PC-3 (cell line): ENCODE measurements at regions of chr7 and their contacts with region 1.

Region 1: GRCh38 chr7:24979863-24980533 is at the start of gene OSBPL3:
- DNase-seq: peak; percentile 96
- ATAC-seq: peak; percentile 66
- H3K4me3 ChIP-seq: peak within 1 kb of the TSS; percentile 72
- H3K27ac ChIP-seq: peak within 1 kb of the TSS; percentile 62
- H3K4me1 ChIP-seq: peaks cover 18% of the 10 kb centered on the region
- H3K27me3 ChIP-seq: no peaks in the 10 kb centered on the region
- CTCF ChIP-seq: no peak
- total RNA-seq, gene OSBPL3: 10.5 and 11.6 TPM in 2 replicates

Region 2: DNA sequence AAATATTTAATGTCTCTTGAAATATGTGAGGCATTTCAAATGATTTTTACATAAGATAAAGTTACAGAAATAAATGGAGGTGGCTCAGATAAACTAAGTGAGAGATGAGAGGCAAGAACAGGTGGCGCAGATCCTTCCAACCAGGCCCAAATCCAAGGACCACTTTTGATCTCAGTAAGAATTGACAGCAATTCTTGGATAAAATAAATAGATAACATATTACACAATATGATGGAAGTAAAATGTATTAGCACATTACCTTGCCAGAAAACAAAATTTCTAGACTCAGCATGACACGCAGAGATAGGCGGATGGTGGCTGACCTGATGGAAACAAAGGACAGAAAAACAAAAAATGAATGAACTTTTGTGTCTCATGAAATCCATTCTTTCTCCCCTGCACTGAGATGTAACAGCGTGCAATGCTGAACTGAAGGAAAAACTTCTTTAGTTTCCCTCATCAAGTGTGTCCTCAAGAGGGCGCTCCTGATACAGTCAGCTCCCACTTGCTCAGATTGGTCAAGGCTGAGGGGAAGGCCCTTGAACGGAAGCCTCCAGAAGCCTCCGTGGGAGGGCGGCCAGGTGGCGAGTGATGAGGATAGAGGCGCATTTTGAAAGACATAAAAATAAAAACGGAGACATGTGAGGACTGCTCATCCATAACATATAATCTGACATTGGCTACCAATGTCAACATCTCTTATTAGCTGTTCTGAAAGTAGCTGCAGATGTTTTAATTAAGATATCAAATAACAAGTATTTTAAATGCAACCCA is 159.9 kb before region 1 on chr7:
- CTCF ChIA-PET with region 1: interaction called, 8 read pairs
- POLR2A ChIA-PET with region 1: interaction called, 8 read pairs
- intact Hi-C with region 1: loop called (anchors 1 kb)
- DNase-seq: peak; percentile 89
- ATAC-seq: peak; percentile 57
- H3K4me3 ChIP-seq: peak overlapping the region; percentile 46
- H3K27ac ChIP-seq: peak overlapping the region; percentile 97
- H3K4me1 ChIP-seq: peaks cover 39% of the 10 kb centered on the region
- H3K27me3 ChIP-seq: no peaks in the 10 kb centered on the region
- CTCF ChIP-seq: peak; percentile 95

Region 3: DNA sequence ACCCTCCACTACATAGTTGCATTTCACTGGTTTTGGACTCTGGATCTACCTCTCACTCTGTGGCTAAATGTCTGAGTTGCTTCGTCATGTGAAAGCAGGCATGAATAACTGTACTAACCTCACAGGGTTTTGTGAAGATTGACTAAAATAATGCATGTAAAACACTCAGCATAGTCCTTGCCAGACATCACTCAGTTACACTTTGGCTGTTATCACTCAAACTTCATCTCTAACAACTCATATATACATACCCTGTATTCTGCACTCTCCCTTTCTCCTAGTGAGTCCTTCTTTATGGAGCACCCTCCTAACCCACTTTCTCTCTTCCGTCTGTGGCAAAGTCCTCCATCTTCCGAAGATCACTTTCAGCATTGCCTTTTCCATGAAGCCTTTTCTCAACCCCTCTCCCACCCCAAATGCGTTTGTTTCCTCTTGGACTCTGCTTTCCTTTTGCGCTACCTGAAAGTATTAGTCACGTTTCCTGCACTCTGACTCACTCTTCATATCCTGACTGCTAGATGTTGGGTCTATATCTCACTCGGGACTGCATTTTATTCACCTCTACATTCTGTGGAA is 72.6 kb before region 1 on chr7:
- CTCF ChIA-PET with region 1: interaction called, 3 read pairs
- POLR2A ChIA-PET with region 1: no interaction called
- intact Hi-C with region 1: loop called (anchors 5 kb)
- DNase-seq: peak; percentile 81
- ATAC-seq: peak; percentile 92
- H3K4me3 ChIP-seq: peak overlapping the region; percentile 43; the same call in 1 of the 2 replicates
- H3K27ac ChIP-seq: peak overlapping the region; percentile 80
- H3K4me1 ChIP-seq: peaks cover 52% of the 10 kb centered on the region
- H3K27me3 ChIP-seq: no peaks in the 10 kb centered on the region
- CTCF ChIP-seq: no peak

Region 4: DNA sequence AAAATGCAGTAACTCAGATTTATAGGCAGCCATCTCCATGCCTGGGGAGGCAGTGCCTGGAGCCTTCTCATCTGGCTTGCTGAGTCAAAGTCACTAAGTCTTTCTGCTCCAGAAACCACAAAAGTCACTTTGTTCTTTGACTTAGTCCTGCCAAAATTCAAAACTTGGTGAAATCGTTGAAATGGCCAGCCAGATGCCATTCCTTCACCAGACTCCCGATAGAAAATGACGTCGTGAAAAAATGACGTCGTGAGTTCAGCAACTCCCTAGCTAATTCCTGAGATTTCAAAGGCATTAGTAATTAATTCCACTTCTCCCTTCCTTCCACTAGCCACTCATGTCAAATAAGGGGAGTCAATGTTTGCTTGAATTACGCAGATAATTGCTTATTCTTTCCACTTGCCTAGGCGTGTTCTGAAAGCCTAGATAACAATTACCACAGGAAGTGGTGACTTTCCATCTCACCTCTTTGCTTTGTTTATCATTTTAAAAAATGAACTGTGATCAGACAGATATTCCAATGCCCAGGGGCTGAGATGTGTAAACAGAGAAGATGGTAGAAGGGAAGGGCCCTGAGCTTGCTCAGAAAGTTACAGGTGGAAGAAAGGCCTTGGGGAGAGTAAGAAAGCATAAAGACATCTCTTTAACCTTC is 48.5 kb after region 1 on chr7:
- CTCF ChIA-PET with region 1: no interaction called
- POLR2A ChIA-PET with region 1: interaction called, 4 read pairs
- intact Hi-C with region 1: loop called (anchors 1 kb)
- DNase-seq: peak; percentile 84
- ATAC-seq: peak; percentile 57
- H3K4me3 ChIP-seq: no peak overlapping the region
- H3K27ac ChIP-seq: peak overlapping the region; percentile 26
- H3K4me1 ChIP-seq: peaks cover 47% of the 10 kb centered on the region
- H3K27me3 ChIP-seq: no peaks in the 10 kb centered on the region
- CTCF ChIP-seq: no peak

Region 5: GRCh38 chr7:25093268-25093826 is 113.3 kb after region 1 on chr7:
- CTCF ChIA-PET with region 1: interaction called, 5 read pairs
- POLR2A ChIA-PET with region 1: no interaction called
- intact Hi-C with region 1: loop called (anchors 1 kb)
- DNase-seq: peak; percentile 90
- ATAC-seq: peak; percentile 89
- H3K4me3 ChIP-seq: no peak overlapping the region
- H3K27ac ChIP-seq: no peak overlapping the region
- H3K4me1 ChIP-seq: peaks cover 4% of the 10 kb centered on the region; the same call in 1 of the 2 replicates
- H3K27me3 ChIP-seq: no peaks in the 10 kb centered on the region
- CTCF ChIP-seq: peak; percentile 91